B cell (primary cell): ENCODE measurements at regions of chr1 and their contacts with region 1.

Region 1: DNA sequence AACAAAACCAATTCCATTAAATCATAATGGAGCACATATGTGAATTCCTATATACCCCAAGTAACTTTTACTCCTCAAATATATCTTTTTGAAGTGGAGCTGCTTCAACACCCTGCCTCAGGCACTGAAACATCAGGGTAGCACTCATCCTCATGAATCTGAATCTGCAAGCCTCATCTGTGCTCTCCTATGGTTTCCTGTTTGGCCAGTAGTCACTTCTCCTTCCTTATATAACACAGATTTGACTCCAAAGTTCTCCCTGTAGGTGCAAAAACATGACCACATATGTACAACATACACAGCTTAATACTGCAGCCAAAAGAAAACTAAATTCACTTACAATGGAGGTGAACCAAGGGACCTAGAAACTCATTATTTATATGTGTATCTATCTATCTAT is 7.2 kb downstream of the TRIT1 start:
- DNase-seq: no peak
- ATAC-seq: no peak
- H3K4me3 ChIP-seq: no peak overlapping the region
- H3K4me3 Mint-ChIP-seq: peak overlapping the region; percentile 47
- H3K27ac ChIP-seq: peak overlapping the region in 1 of 2 donors; percentile 40
- H3K27ac Mint-ChIP-seq: peak overlapping the region; percentile 21
- H3K4me1 ChIP-seq: peaks cover 16 to 20% of the 10 kb centered on the region in 2 donors
- H3K4me1 Mint-ChIP-seq: peaks cover 45% of the 10 kb centered on the region
- H3K27me3 ChIP-seq: no peaks in the 10 kb centered on the region
- H3K27me3 Mint-ChIP-seq: no peaks in the 10 kb centered on the region
- CTCF ChIP-seq: no peak

Region 2: GRCh38 chr1:39230261-39231190 is 645.6 kb before region 1 on chr1:
- CTCF ChIA-PET with region 1: no interaction called
- POLR2A ChIA-PET with region 1: no interaction called
- intact Hi-C with region 1: no loop called
- DNase-seq: peak; percentile 77
- ATAC-seq: peak; percentile 95
- H3K4me3 ChIP-seq: no peak overlapping the region
- H3K4me3 Mint-ChIP-seq: peak overlapping the region; percentile 52
- H3K27ac ChIP-seq: peak overlapping the region; percentile 63 to 83
- H3K27ac Mint-ChIP-seq: peak overlapping the region; percentile 91
- H3K4me1 ChIP-seq: peaks cover 22 to 23% of the 10 kb centered on the region in 2 donors
- H3K4me1 Mint-ChIP-seq: peaks cover 39% of the 10 kb centered on the region
- H3K27me3 ChIP-seq: no peaks in the 10 kb centered on the region
- H3K27me3 Mint-ChIP-seq: no peaks in the 10 kb centered on the region
- CTCF ChIP-seq: no peak

Region 3: DNA sequence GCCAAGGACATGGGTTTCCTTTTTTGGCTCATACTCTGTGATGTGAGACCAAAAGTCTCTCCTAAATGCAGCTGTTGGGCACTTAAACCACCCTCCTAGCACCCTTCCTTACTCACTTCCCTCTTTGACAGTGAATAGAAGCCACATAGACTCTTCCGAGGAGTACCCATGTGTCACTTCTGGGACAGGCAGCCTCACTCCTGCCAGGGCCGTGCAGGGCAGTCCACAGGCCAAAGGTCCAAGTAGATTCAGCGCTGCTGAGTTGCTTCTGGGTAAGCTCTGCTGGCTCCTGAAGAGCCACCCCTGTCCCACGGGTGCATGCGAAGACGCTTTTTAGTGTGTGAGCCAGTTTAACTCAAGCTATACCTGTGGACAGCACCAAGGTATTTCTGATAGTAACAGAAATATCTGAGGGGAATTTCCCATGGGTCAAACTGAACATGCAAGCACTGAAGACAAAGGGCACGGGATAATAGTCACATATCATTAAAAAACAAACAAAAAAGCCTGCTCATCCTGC is 50.7 kb before region 1 on chr1:
- CTCF ChIA-PET with region 1: no interaction called
- POLR2A ChIA-PET with region 1: no interaction called
- intact Hi-C with region 1: loop called (anchors 5 kb)
- DNase-seq: peak; percentile 28
- ATAC-seq: peak; percentile 33
- H3K4me3 ChIP-seq: no peak overlapping the region
- H3K4me3 Mint-ChIP-seq: no peak overlapping the region
- H3K27ac ChIP-seq: no peak overlapping the region
- H3K27ac Mint-ChIP-seq: no peak overlapping the region
- H3K4me1 ChIP-seq: peaks cover 0 to 8% of the 10 kb centered on the region in 2 donors
- H3K4me1 Mint-ChIP-seq: peaks cover 16% of the 10 kb centered on the region
- H3K27me3 ChIP-seq: peaks cover 0 to 7% (median 2%) of the 10 kb centered on the region in 4 experiments
- H3K27me3 Mint-ChIP-seq: peaks cover 12% of the 10 kb centered on the region
- CTCF ChIP-seq: no peak

Region 4: DNA sequence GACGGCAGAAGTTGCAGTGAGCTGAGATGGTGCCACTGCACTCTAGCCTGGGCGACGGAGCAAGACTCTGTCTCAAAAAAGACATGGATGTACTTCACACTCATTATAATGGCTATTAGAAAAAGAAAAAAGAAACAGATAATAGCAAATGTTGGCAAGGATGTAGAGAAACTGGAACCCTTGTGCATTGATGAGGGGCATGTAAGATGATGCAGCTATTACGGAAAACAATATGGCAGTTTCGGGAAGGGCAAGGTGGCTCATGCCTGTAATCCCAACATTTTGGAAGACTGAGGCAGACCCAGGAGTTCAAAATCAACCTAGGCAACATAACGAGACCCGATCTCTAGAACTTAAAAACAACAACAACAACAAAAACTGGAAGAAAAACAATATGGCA is 15.1 kb before region 1 on chr1:
- CTCF ChIA-PET with region 1: no interaction called
- POLR2A ChIA-PET with region 1: no interaction called
- intact Hi-C with region 1: no loop called
- DNase-seq: no peak
- ATAC-seq: no peak
- H3K4me3 ChIP-seq: no peak overlapping the region
- H3K4me3 Mint-ChIP-seq: no peak overlapping the region
- H3K27ac ChIP-seq: no peak overlapping the region
- H3K27ac Mint-ChIP-seq: no peak overlapping the region
- H3K4me1 ChIP-seq: no peaks in the 10 kb centered on the region
- H3K4me1 Mint-ChIP-seq: peaks cover 2% of the 10 kb centered on the region
- H3K27me3 ChIP-seq: no peaks in the 10 kb centered on the region
- H3K27me3 Mint-ChIP-seq: no peaks in the 10 kb centered on the region
- CTCF ChIP-seq: no peak